ENCODE measurements at regions of chr1 and their contacts with region 1.

Region 1: DNA sequence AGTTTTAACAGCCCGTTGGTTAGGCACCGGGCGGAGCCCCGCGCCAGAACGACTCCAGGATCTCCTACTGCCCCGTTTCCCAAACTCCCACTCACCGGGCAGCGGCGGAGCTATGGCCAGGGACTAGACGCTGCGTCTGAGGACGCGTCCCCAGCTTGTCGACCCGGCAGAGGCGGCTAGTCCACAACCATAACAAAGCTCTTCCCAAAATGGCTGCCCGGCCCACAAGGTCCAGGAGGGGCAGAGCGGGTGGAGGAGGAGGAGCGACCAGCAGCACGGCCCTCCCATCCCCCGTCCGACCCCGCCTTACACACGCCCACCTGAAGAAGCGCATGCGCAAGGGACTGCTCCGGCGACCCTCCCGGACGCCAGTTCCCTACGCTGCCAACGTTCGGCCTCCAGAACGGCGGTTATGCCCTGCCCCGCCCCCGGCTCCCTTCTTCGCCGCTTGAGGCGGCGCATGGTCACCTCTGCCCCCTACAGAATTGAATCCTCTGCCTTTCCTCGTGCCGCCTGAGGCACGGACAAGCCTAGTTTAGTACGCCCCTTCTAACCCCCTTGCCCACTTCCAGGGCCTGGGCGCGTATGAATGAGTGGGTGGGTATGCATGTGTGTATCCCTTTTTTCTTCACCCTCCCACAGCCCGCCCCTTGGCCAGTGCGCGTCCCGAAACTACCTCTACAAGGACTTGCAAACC is at the start of gene GPBP1L1:
- DNase-seq: peak; percentile 98 to 99
- ATAC-seq: peak; percentile 69 to 89 (median 71)
- H3K4me3 ChIP-seq: peak within 1 kb of the TSS; percentile 90
- H3K4me3 Mint-ChIP-seq: peak within 1 kb of the TSS; percentile 99
- H3K27ac ChIP-seq: peak within 1 kb of the TSS; percentile 97
- H3K27ac Mint-ChIP-seq: peak within 1 kb of the TSS; percentile 100
- H3K4me1 ChIP-seq: peaks cover 27% of the 10 kb centered on the region
- H3K4me1 Mint-ChIP-seq: peaks cover 44 to 47% of the 10 kb centered on the region in 2 donors
- H3K27me3 ChIP-seq: no peaks in the 10 kb centered on the region
- H3K27me3 Mint-ChIP-seq: no peaks in the 10 kb centered on the region
- CTCF ChIP-seq: no peak
- total RNA-seq, gene GPBP1L1: 144 to 176 (median 153) TPM

Region 2: DNA sequence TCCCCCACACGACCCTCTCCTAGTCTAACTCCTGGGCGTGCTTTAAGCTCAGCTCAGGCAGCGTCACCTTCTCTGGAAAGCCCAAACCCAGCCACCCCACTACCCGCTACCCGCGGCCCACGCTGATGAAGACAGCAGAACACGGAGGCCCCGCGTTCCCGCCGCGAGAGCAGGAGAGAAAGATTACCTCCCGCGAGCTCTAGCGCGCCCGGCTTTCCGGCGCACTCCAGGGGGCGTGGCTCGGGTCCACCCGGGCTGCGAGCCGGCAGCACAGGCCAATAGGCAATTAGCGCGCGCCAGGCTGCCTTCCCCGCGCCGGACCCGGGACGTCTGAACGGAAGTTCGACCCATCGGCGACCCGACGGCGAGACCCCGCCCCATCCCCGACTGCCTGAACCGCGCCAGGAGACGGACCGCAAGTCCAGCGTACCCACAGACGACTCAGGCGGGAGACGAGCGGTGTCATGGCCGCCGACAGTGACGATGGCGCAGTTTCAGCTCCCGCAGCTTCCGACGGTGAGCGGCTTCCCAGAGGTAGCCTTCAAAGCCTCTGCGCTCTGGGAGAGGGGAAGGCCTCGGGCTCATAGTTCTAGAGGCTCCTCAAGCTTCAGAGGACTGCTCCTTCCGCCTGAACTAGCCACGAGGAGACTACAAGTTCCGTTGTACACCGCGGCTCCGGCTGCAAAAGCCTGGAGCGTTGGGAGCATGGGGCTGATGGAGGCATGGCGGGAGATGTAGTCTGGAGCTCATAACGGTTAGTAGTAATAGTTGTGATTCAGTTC is 346.5 kb before region 1 on chr1 and contains the starts of genes MUTYH and TOE1:
- intact Hi-C with region 1: loop called (anchors 2 kb)
- DNase-seq: peak; percentile 81 to 93
- ATAC-seq: peak; percentile 82 to 92 (median 85)
- H3K4me3 ChIP-seq: peak within 1 kb of the TSS; percentile 95
- H3K4me3 Mint-ChIP-seq: peak within 1 kb of the TSS; percentile 99
- H3K27ac ChIP-seq: peak within 1 kb of the TSS; percentile 99
- H3K27ac Mint-ChIP-seq: peak within 1 kb of the TSS; percentile 94 to 96
- H3K4me1 ChIP-seq: peaks cover 27% of the 10 kb centered on the region
- H3K4me1 Mint-ChIP-seq: peaks cover 48 to 49% of the 10 kb centered on the region in 2 donors
- H3K27me3 ChIP-seq: no peaks in the 10 kb centered on the region
- H3K27me3 Mint-ChIP-seq: no peaks in the 10 kb centered on the region
- CTCF ChIP-seq: no peak
- total RNA-seq, gene MUTYH: 44.0 to 55.6 (median 51.5) TPM
- total RNA-seq, gene TOE1: 23.2 to 36.8 (median 28.2) TPM

Region 3: GRCh38 chr1:45583264-45583665 is 103.2 kb before region 1 on chr1:
- intact Hi-C with region 1: loop called (anchors 2 kb)
- DNase-seq: peak; percentile 89 to 98
- ATAC-seq: peak; percentile 79 to 91 (median 79)
- H3K4me3 ChIP-seq: peak overlapping the region; percentile 97
- H3K4me3 Mint-ChIP-seq: peak overlapping the region; percentile 99
- H3K27ac ChIP-seq: peak overlapping the region; percentile 91
- H3K27ac Mint-ChIP-seq: peak overlapping the region; percentile 92 to 99
- H3K4me1 ChIP-seq: peaks cover 27% of the 10 kb centered on the region
- H3K4me1 Mint-ChIP-seq: peaks cover 35 to 38% of the 10 kb centered on the region in 2 donors
- H3K27me3 ChIP-seq: no peaks in the 10 kb centered on the region
- H3K27me3 Mint-ChIP-seq: no peaks in the 10 kb centered on the region
- CTCF ChIP-seq: no peak

Region 4: GRCh38 chr1:45803301-45803780 is 116.9 kb after region 1 on chr1 and contains the start of gene MAST2:
- intact Hi-C with region 1: loop called (anchors 5 kb)
- DNase-seq: peak; percentile 85 to 89
- ATAC-seq: peak; percentile 95 to 98 (median 96)
- H3K4me3 ChIP-seq: peak within 1 kb of the TSS; percentile 28
- H3K4me3 Mint-ChIP-seq: peak within 1 kb of the TSS; percentile 92
- H3K27ac ChIP-seq: peak within 1 kb of the TSS; percentile 1
- H3K27ac Mint-ChIP-seq: peak within 1 kb of the TSS; percentile 79 to 88
- H3K4me1 ChIP-seq: peaks cover 17% of the 10 kb centered on the region
- H3K4me1 Mint-ChIP-seq: peaks cover 16 to 31% of the 10 kb centered on the region in 2 donors
- H3K27me3 ChIP-seq: no peaks in the 10 kb centered on the region
- H3K27me3 Mint-ChIP-seq: no peaks in the 10 kb centered on the region
- CTCF ChIP-seq: no peak
- total RNA-seq, gene MAST2: 25.3 to 28.6 (median 27.9) TPM